Endothelial cell of umbilical vein (primary cell): ENCODE measurements at regions of chr5 and their contacts with region 1.

Region 1: DNA sequence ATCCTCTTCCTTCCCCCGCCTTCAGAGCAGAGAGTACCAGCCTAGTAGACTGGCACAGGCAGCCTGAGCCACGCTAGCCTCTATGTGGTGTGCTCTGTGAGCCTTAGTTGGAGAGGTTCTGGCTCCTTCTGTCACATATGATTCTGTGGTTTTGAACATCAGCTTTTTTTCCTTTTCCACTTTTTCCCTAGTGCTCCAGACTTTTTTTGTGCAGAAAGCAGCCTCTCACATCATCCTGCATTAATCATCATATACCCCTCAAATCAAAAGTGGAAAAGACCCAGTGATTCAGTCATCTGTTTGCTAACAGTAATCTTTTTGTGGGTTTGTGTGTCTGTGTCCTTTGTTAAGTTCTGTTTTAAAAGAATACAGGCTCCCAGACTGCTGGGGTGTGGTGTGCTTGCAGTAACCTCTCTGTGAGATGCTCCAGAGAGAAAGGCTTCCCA is 663.9 kb upstream of the RGMB start:
- DNase-seq: peak; percentile 47
- H3K4me3 ChIP-seq: no peak overlapping the region
- H3K27ac ChIP-seq: peak overlapping the region; percentile 97
- H3K4me1 ChIP-seq: peaks cover 40% of the 10 kb centered on the region
- H3K27me3 ChIP-seq: no peaks in the 10 kb centered on the region
- CTCF ChIP-seq: no peak
- POLR2A ChIP-seq: no peak

Region 2: DNA sequence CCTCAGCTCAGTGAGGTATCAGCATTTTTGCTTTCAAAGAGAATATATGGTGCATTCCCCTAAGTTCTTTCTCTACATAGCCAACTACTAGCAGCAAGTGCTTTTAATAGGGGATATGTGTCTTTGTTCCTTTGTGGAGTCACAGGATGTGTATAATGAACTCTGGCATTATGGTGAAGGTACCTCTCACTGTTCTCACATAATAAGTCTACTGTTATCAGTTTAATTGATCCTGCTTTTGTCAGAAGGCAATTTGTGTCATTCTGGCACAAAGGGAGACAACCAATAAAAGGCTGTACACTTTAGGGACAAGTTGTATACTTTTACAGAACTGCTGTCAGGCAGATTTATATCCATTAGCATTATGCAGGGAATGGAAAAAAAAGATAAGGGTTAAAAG is 395.2 kb before region 1 on chr5:
- CTCF ChIA-PET with region 1: no interaction called
- POLR2A ChIA-PET with region 1: no interaction called
- dilution Hi-C with region 1: no loop called
- intact Hi-C with region 1: no loop called
- DNase-seq: no peak
- H3K4me3 ChIP-seq: no peak overlapping the region
- H3K27ac ChIP-seq: no peak overlapping the region
- H3K4me1 ChIP-seq: no peaks in the 10 kb centered on the region
- H3K27me3 ChIP-seq: no peaks in the 10 kb centered on the region
- CTCF ChIP-seq: no peak
- POLR2A ChIP-seq: no peak

Region 3: DNA sequence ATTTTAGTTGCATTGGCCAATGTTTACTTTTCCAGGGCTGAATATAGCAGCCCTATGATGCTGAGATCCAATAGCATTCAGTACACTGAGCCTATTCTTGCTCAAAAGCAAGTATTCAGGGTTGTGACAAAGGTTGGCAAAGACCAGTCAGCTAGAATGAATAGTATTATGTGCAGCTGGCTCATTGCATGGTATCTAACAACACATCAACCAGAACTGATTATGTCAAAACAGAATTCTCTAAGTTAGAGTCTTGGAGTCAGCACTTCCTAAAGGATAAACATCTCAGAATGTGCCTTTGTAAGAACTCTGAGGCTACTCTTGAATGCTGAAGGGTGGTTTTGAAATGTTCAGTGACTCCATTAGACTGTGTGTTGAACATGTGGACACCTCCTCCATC is 110.6 kb before region 1 on chr5:
- CTCF ChIA-PET with region 1: no interaction called
- POLR2A ChIA-PET with region 1: no interaction called
- dilution Hi-C with region 1: no loop called
- intact Hi-C with region 1: no loop called
- DNase-seq: no peak
- H3K4me3 ChIP-seq: no peak overlapping the region
- H3K27ac ChIP-seq: no peak overlapping the region
- H3K4me1 ChIP-seq: no peaks in the 10 kb centered on the region
- H3K27me3 ChIP-seq: no peaks in the 10 kb centered on the region
- CTCF ChIP-seq: no peak
- POLR2A ChIP-seq: no peak

Region 4: GRCh38 chr5:98099448-98100105 is 10.0 kb before region 1 on chr5:
- CTCF ChIA-PET with region 1: interaction called, 10 read pairs
- POLR2A ChIA-PET with region 1: interaction called, 3 read pairs
- dilution Hi-C with region 1: no loop called
- intact Hi-C with region 1: loop called (anchors 1 kb)
- DNase-seq: peak; percentile 59
- H3K4me3 ChIP-seq: peak overlapping the region in 1 of 3 experiments; percentile 15
- H3K27ac ChIP-seq: peak overlapping the region; percentile 84
- H3K4me1 ChIP-seq: peaks cover 27% of the 10 kb centered on the region
- H3K27me3 ChIP-seq: no peaks in the 10 kb centered on the region
- CTCF ChIP-seq: no peak
- POLR2A ChIP-seq: no peak

Region 5: DNA sequence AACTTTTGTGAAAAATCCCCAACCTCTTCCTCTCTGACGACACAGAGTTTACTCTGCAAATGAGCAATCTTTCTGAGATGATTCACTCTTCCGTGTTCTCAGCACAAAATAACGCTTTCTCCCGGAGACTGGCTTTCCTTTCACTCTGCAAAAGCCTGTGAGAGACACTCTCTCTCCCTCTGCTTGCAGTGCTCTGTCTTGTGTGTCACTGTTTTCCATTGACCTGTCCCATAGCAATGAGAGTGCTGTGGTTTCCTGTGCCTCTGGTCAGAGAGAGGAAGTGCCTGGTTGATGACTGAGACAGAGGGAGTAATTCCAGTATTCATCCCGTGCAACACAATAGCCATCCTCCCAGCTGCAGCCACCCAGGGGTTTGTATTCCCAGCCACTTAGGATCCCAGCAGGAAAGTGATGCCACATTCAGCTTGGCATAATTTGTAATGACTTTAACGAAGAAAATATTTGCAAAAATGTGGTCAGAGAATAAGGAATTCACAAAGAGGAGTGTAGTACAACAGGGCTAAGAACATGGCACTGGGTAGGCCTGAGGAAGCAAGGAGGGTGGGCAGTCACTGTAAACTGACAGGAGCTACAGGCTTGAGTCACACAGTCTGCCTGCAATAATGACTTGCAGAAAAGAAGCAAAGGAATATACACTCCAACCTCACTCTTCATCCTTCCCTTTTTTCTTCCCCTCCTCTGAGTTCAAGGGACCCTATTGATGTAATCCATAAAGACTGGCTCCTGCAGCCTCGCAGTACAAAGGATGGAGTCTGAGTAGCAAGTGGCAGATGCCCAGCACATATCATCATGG is 200.4 kb after region 1 on chr5:
- CTCF ChIA-PET with region 1: no interaction called
- POLR2A ChIA-PET with region 1: no interaction called
- dilution Hi-C with region 1: no loop called
- intact Hi-C with region 1: loop called (anchors 1 kb)
- DNase-seq: peak; percentile 95
- H3K4me3 ChIP-seq: peak overlapping the region in 2 of 3 experiments; percentile 10 to 72
- H3K27ac ChIP-seq: peak overlapping the region; percentile 97
- H3K4me1 ChIP-seq: peaks cover 63% of the 10 kb centered on the region
- H3K27me3 ChIP-seq: no peaks in the 10 kb centered on the region
- CTCF ChIP-seq: no peak
- POLR2A ChIP-seq: no peak